ENCODE measurements at regions of chr17 and their contacts with region 1.

Region 1: GRCh38 chr17:39461113-39461925 is at the start of gene CDK12:
- DNase-seq: peak; percentile 93
- ATAC-seq: peak; percentile 93
- H3K4me3 ChIP-seq: peak within 1 kb of the TSS; percentile 72 to 89
- H3K27ac ChIP-seq: peak within 1 kb of the TSS; percentile 86
- H3K4me1 ChIP-seq: no peaks in the 10 kb centered on the region
- H3K27me3 ChIP-seq: no peaks in the 10 kb centered on the region
- CTCF ChIP-seq: no peak
- total RNA-seq, gene CDK12: 57.8 TPM

Region 2: DNA sequence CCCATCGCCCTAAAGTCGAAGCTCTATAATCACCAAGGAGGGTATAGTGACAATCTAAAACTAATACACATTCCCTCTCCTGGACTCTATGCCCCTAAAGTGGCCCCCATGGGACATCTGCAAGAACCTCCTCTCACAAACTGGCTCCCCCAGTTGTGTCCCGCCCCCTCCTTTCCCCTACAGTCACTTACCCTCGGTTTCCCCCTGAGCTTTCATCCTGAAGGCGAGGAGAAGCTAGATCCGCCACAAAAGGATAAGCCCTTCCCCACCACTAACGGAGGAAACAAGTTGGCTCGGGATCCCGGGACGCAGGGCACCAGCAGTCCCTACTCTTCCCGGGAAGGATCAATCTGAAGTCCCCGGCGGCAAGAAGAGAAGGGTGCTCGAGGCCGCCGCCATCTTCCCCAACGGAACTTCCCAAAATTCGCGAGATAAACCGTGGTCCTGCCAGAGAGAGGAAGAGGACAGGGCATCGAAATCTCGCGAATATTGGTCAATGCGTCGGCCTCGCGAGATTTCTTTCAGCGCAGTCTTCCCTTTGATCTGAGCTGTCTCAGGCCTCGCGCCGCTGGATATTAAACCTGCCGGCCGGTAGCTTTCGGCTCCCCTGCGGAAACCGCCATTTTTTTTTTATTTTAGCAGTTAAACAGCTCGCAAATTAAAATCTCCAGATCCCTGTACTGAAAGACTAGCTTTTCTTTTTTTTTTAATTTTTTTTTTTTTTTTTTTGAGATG is 10.3 kb before region 1 on chr17 and contains the start of gene MED1:
- CTCF ChIA-PET with region 1: interaction called, 4 read pairs
- POLR2A ChIA-PET with region 1: interaction called, 29 read pairs
- in situ Hi-C with region 1: no loop called
- intact Hi-C with region 1: no loop called
- DNase-seq: peak; percentile 88
- ATAC-seq: peak; percentile 100
- H3K4me3 ChIP-seq: peak within 1 kb of the TSS; percentile 96 to 97
- H3K27ac ChIP-seq: peak within 1 kb of the TSS; percentile 97
- H3K4me1 ChIP-seq: no peaks in the 10 kb centered on the region; the same call in 1 of the 2 replicates
- H3K27me3 ChIP-seq: no peaks in the 10 kb centered on the region
- CTCF ChIP-seq: no peak
- total RNA-seq, gene MED1: 41.4 TPM

Region 3: DNA sequence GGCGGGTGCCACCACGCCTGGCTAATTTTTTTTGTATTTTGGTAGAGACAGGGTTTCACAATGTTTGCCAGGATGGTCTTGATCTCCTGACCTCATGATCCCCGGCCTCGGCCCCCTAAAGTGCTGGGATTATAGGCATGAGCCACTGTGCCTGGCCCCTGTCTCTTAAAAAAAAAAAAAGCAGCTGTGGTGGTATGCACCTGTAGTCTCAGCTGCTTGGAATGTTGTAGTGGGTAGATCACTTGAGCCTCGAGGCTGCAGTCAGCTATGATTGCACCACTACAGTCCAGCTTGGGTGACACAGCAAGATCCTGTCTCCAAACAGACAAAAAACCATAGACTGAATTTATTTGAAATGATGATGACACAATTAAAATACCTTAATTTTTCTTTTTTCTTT is 24.2 kb after region 1 on chr17:
- CTCF ChIA-PET with region 1: no interaction called
- POLR2A ChIA-PET with region 1: interaction called, 11 read pairs
- in situ Hi-C with region 1: no loop called
- intact Hi-C with region 1: no loop called
- DNase-seq: peak; percentile 13
- ATAC-seq: 0 out of 2 replicates have a peak, but pooled peaks have one; percentile 60
- H3K4me3 ChIP-seq: no peak overlapping the region
- H3K27ac ChIP-seq: no peak overlapping the region
- H3K4me1 ChIP-seq: no peaks in the 10 kb centered on the region
- H3K27me3 ChIP-seq: no peaks in the 10 kb centered on the region
- CTCF ChIP-seq: no peak

Region 4: GRCh38 chr17:39517224-39517623 is 55.9 kb after region 1 on chr17:
- CTCF ChIA-PET with region 1: no interaction called
- POLR2A ChIA-PET with region 1: no interaction called
- in situ Hi-C with region 1: no loop called
- intact Hi-C with region 1: no loop called
- DNase-seq: no peak
- ATAC-seq: no peak
- H3K4me3 ChIP-seq: no peak overlapping the region
- H3K27ac ChIP-seq: no peak overlapping the region
- H3K4me1 ChIP-seq: no peaks in the 10 kb centered on the region
- H3K27me3 ChIP-seq: no peaks in the 10 kb centered on the region
- CTCF ChIP-seq: no peak

Region 5: DNA sequence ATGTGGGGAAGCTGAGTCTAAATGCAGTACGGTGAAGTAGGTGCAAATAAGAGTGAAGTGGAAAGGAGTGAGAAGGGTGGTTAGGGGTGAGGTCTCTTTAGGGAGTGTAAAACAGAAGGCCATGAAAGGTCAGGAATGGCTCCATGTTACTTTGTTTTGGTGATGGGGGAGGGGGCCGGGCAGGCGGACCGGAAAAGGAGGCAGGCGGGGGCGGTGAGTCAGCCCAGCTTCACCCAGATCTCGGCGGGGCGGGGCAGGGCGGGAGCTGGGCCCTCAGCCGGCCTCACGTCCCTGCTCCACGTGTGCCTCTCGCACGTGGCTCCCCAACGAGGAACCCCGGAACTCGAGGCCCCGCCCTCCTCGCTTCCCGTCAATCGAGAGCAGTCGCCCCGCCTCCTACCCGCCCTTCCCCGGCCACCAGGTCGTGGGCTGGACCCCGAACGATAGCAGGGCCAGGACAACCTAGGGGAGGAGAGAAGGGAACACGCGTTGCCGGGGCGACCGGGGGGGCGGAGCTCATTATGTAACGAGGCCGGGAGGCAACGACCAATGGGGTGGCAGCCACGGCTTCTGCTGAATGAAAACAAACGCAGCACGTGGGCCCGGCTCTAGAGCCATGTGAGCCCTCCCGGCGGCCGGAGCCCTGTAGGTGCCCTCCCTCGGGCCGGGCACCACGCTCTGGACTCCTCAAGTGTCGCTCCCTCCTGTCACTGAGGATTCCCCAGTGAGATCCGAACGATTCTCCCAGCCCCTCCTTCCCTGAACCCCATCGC is 637.7 kb after region 1 on chr17:
- CTCF ChIA-PET with region 1: no interaction called
- POLR2A ChIA-PET with region 1: interaction called, 10 read pairs
- in situ Hi-C with region 1: no loop called
- intact Hi-C with region 1: no loop called
- DNase-seq: peak; percentile 97
- ATAC-seq: peak; percentile 85
- H3K4me3 ChIP-seq: peak overlapping the region; percentile 87 to 98
- H3K27ac ChIP-seq: peak overlapping the region; percentile 89
- H3K4me1 ChIP-seq: peaks cover 32% of the 10 kb centered on the region
- H3K27me3 ChIP-seq: no peaks in the 10 kb centered on the region
- CTCF ChIP-seq: no peak